CD4-positive, alpha-beta T cell (primary cell): ENCODE measurements at regions of chr3 and their contacts with region 1.

Region 1: DNA sequence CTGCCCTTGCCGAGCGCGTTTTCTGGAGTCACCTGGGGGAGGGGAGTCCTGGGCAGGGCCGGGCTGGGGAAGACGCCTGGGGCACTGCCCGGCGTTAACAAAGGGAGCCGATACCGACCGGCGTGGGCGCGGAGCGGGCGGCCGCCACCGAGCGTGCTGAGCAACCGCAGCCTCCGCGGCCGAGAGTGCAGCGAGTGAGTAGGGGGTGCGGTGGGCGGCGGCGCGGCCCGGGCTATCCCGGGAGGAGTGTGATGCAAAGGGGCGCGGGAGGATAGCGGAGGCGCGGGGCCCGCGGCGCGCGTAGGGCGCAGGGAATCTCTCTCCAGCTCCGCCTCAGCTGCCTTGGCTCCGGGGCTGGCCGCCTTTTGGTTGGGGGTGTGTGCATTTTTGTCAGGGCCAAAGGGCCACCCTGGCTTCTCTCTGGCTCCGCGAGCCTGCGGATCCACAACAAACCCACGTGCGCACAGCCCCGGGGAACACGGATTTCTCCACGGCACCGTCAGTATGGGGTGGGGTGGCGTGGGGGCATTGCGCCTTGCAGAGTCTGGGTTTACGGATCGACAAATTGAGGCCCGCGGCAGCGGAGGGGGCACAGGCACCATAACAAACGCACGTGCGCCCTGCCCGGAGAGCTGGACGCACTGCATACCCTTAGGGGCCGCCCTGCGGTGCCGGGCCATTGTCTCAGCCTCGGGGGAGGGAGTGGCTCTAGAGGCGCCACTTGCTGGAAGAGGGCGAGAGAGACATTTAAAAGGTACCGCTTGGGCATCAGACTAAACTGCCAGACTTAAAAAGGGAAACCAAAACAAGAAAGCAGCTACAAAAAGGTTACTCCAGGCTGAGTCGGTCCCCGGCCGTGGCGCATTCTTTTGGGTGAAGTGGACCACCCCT is 560 bp downstream of the ST6GAL1 start:
- DNase-seq: peak; percentile 47 to 88 (median 62)
- ATAC-seq: peak; percentile 76
- H3K4me3 ChIP-seq: peak overlapping the region; percentile 97
- H3K4me3 Mint-ChIP-seq: peak overlapping the region; percentile 100
- H3K27ac ChIP-seq: peak overlapping the region; percentile 68 to 87
- H3K27ac Mint-ChIP-seq: peak overlapping the region; percentile 94
- H3K4me1 ChIP-seq: peaks cover 34% of the 10 kb centered on the region
- H3K4me1 Mint-ChIP-seq: peaks cover 43% of the 10 kb centered on the region
- H3K27me3 ChIP-seq: no peaks in the 10 kb centered on the region
- H3K27me3 Mint-ChIP-seq: no peaks in the 10 kb centered on the region
- CTCF ChIP-seq: peak; percentile 48

Region 2: DNA sequence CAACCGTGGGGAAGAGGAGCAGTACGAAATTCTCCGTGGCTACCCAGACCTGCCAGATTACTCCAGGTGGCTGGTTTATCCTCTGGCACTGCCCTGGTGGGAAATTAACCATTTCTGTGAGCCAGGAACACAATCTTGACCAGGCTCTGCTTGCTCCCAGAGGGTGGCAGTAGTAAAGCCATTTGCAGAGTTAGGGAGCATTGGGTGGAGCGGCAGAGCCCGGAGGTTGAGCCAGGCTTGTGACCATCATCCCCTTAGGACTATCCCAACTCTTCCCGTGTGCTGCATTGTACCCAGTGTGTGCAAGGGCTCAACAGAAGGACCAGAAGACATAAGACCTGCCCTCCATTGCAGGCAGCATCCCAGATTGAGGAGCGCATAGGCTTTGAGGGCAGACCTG is 208.4 kb before region 1 on chr3:
- CTCF ChIA-PET with region 1: no interaction called
- POLR2A ChIA-PET with region 1: no interaction called
- intact Hi-C with region 1: no loop called
- DNase-seq: peak in 1 of 14 experiments; percentile 9
- ATAC-seq: no peak
- H3K4me3 ChIP-seq: no peak overlapping the region
- H3K4me3 Mint-ChIP-seq: no peak overlapping the region
- H3K27ac ChIP-seq: no peak overlapping the region
- H3K27ac Mint-ChIP-seq: no peak overlapping the region
- H3K4me1 ChIP-seq: no peaks in the 10 kb centered on the region
- H3K4me1 Mint-ChIP-seq: no peaks in the 10 kb centered on the region
- H3K27me3 ChIP-seq: no peaks in the 10 kb centered on the region
- H3K27me3 Mint-ChIP-seq: no peaks in the 10 kb centered on the region
- CTCF ChIP-seq: no peak

Region 3: DNA sequence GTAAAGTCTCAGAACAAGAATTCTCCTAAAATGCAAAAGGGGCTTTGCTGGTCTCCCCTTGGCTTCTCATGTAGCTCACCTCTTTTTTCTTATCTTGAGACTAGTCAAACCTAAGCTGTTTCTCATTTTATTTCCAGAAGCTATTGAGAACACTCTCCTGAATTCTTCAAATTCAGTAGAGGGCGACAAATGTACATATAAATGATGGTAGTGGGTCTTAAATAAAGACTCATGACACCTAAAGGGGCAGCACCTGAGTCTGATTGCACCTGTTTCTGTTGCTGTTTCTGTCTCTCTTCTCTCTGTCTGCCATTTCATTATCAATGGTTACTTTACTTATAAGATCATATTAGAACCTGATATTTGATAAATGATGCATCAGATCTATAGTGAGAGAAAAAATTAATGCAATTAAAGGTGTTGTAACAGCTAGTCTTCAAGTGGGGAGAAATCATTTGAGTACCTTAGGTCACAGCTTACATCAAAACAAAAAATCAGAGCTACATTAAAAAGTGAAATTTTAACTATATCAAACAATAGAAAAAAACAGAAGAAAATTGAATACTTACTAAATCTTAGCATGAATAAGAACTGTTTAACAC is 81.4 kb before region 1 on chr3:
- CTCF ChIA-PET with region 1: interaction called, 23 read pairs
- POLR2A ChIA-PET with region 1: interaction called, 35 read pairs
- intact Hi-C with region 1: loop called (anchors 1 kb)
- DNase-seq: peak in 4 of 14 experiments; percentile 24 to 81 (median 76)
- ATAC-seq: peak; percentile 99
- H3K4me3 ChIP-seq: no peak overlapping the region
- H3K4me3 Mint-ChIP-seq: no peak overlapping the region
- H3K27ac ChIP-seq: no peak overlapping the region
- H3K27ac Mint-ChIP-seq: peak overlapping the region; percentile 1
- H3K4me1 ChIP-seq: peaks cover 3% of the 10 kb centered on the region
- H3K4me1 Mint-ChIP-seq: peaks cover 12% of the 10 kb centered on the region
- H3K27me3 ChIP-seq: peaks cover 0 to 4% of the 10 kb centered on the region in 2 experiments
- H3K27me3 Mint-ChIP-seq: peaks cover 5% of the 10 kb centered on the region
- CTCF ChIP-seq: peak; percentile 75

Region 4: DNA sequence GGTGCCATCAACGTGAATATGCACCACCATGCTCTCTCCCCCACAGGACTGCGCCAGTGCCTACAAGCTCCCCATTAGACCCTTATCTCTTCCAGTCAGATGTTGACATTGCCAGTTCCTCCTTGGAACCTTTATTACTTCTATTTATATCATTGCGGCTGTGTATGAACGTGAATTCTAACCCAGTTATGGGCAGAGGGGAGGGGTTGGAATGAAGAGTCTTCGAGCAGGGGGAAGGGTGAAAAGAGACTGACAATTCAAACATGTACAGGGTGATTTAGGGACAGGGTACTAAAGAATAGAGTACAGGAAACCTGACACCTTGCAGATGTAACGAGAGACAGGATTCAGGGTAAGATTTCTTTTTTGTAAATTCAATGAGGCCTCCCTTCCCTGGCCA is 42.3 kb before region 1 on chr3:
- CTCF ChIA-PET with region 1: no interaction called
- POLR2A ChIA-PET with region 1: no interaction called
- intact Hi-C with region 1: no loop called
- DNase-seq: no peak
- ATAC-seq: no peak
- H3K4me3 ChIP-seq: no peak overlapping the region
- H3K4me3 Mint-ChIP-seq: no peak overlapping the region
- H3K27ac ChIP-seq: no peak overlapping the region
- H3K27ac Mint-ChIP-seq: no peak overlapping the region
- H3K4me1 ChIP-seq: peaks cover 3% of the 10 kb centered on the region
- H3K4me1 Mint-ChIP-seq: peaks cover 10% of the 10 kb centered on the region
- H3K27me3 ChIP-seq: no peaks in the 10 kb centered on the region
- H3K27me3 Mint-ChIP-seq: no peaks in the 10 kb centered on the region
- CTCF ChIP-seq: no peak

Region 5: GRCh38 chr3:186909078-186909853 is 21.6 kb before region 1 on chr3:
- CTCF ChIA-PET with region 1: interaction called, 8 read pairs
- POLR2A ChIA-PET with region 1: interaction called, 80 read pairs
- intact Hi-C with region 1: loop called (anchors 1 to 2 kb)
- DNase-seq: peak; percentile 68 to 93 (median 82)
- ATAC-seq: peak; percentile 93
- H3K4me3 ChIP-seq: peak overlapping the region; percentile 33
- H3K4me3 Mint-ChIP-seq: peak overlapping the region; percentile 81
- H3K27ac ChIP-seq: peak overlapping the region; percentile 64 to 69
- H3K27ac Mint-ChIP-seq: peak overlapping the region; percentile 98
- H3K4me1 ChIP-seq: peaks cover 29% of the 10 kb centered on the region
- H3K4me1 Mint-ChIP-seq: peaks cover 44% of the 10 kb centered on the region
- H3K27me3 ChIP-seq: no peaks in the 10 kb centered on the region
- H3K27me3 Mint-ChIP-seq: no peaks in the 10 kb centered on the region
- CTCF ChIP-seq: no peak

Region 6: DNA sequence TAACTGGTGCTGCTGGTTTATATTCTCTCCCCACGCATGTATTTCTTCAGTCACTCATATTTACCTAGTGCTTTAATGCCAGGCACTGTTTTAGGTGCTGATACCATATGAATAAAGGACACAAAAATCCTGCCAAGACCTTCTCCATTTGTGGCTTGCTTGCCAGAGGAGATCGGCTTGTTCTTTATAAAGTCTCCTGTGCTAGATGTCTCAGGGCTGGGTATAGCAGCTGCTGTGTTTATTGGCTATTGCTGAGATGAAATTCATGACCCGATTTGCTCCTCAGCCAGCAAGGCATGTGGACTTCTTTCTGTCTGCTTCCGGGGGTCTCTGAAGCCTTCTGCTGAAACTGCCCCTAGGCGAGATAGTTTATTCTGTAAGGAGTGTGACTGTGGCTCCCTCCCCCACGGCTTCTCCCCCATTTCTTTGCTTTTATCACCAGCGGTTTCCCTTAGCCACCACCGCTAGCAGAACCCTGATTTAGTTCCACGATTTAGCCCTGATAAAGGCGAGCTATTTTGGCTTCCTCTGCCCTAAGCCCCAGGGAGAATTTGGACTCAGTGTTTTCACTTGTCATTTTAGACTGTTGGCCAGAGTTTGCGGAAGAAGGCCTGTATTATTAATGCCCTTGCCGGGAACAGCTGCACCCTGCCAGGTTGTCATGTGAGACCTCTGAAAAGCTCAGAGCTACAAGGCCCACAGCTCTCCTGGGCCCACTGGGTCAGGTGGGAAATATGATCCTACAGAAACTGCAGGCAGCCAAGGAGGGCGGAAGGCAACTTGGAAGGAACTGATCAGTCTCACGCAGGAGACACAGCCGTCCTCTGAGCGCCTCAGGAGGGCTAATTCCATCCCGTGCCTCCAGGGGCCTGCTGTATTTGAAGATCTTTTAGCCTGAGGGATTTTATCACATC is 46.2 kb after region 1 on chr3:
- CTCF ChIA-PET with region 1: no interaction called
- POLR2A ChIA-PET with region 1: interaction called, 11 read pairs
- intact Hi-C with region 1: no loop called
- DNase-seq: no peak
- ATAC-seq: no peak
- H3K4me3 ChIP-seq: no peak overlapping the region
- H3K4me3 Mint-ChIP-seq: no peak overlapping the region
- H3K27ac ChIP-seq: no peak overlapping the region
- H3K27ac Mint-ChIP-seq: no peak overlapping the region
- H3K4me1 ChIP-seq: no peaks in the 10 kb centered on the region
- H3K4me1 Mint-ChIP-seq: peaks cover 10% of the 10 kb centered on the region
- H3K27me3 ChIP-seq: no peaks in the 10 kb centered on the region
- H3K27me3 Mint-ChIP-seq: no peaks in the 10 kb centered on the region
- CTCF ChIP-seq: no peak

Region 7: GRCh38 chr3:187025656-187026316 is 94.9 kb after region 1 on chr3:
- CTCF ChIA-PET with region 1: interaction called, 8 read pairs
- POLR2A ChIA-PET with region 1: interaction called, 88 read pairs
- intact Hi-C with region 1: loop called (anchors 2 to 5 kb)
- DNase-seq: peak in 9 of 14 experiments; percentile 28 to 64 (median 38)
- ATAC-seq: peak; percentile 2
- H3K4me3 ChIP-seq: peak overlapping the region; percentile 72
- H3K4me3 Mint-ChIP-seq: peak overlapping the region; percentile 89
- H3K27ac ChIP-seq: peak overlapping the region; percentile 72 to 87
- H3K27ac Mint-ChIP-seq: peak overlapping the region; percentile 98
- H3K4me1 ChIP-seq: peaks cover 62% of the 10 kb centered on the region
- H3K4me1 Mint-ChIP-seq: peaks cover 69% of the 10 kb centered on the region
- H3K27me3 ChIP-seq: no peaks in the 10 kb centered on the region
- H3K27me3 Mint-ChIP-seq: no peaks in the 10 kb centered on the region
- CTCF ChIP-seq: no peak

Region 8: GRCh38 chr3:187139126-187139894 is 208.4 kb after region 1 on chr3 and contains the start of gene RPL39L:
- CTCF ChIA-PET with region 1: interaction called, 5 read pairs
- POLR2A ChIA-PET with region 1: interaction called, 21 read pairs
- intact Hi-C with region 1: no loop called
- DNase-seq: peak; percentile 85 to 97 (median 90)
- ATAC-seq: peak; percentile 95
- H3K4me3 ChIP-seq: peak within 1 kb of the TSS; percentile 69
- H3K4me3 Mint-ChIP-seq: peak within 1 kb of the TSS; percentile 90
- H3K27ac ChIP-seq: peak within 1 kb of the TSS; percentile 81 to 85
- H3K27ac Mint-ChIP-seq: peak within 1 kb of the TSS; percentile 93
- H3K4me1 ChIP-seq: peaks cover 16% of the 10 kb centered on the region
- H3K4me1 Mint-ChIP-seq: peaks cover 16% of the 10 kb centered on the region
- H3K27me3 ChIP-seq: no peaks in the 10 kb centered on the region
- H3K27me3 Mint-ChIP-seq: no peaks in the 10 kb centered on the region
- CTCF ChIP-seq: peak; percentile 97
- total RNA-seq, gene RPL39L: 1.1 to 1.7 TPM

Region 9: DNA sequence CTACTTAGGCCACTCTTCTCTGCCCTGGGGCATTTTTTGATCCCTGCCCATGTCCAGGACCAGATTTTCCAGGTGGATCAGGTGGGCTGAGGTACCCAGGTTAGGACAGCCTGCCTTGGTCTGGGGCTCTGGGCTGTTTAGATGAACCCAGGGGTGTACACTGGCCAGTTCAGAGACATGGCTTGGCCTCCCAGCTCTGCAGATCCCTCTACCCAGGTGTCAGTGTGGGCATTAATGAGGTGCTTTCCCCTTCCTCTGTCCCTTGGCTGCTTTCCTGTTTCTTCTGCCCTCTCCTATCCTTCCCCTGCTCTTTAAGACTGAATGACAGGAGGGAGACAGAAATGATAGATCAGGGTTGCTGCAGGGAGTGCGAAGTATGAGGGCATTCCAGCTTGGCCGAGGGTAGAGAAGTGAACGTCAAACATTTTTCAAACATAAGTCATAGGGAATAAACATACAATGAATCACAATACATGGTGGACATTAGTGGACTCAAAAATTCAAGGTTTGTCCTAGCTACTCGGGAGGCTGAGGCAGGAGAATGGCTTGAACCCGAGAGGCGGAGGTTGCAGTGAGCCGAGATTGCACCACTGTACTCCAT is 296.9 kb after region 1 on chr3:
- CTCF ChIA-PET with region 1: no interaction called
- POLR2A ChIA-PET with region 1: no interaction called
- intact Hi-C with region 1: no loop called
- DNase-seq: no peak
- ATAC-seq: no peak
- H3K4me3 ChIP-seq: no peak overlapping the region
- H3K4me3 Mint-ChIP-seq: no peak overlapping the region
- H3K27ac ChIP-seq: no peak overlapping the region
- H3K27ac Mint-ChIP-seq: no peak overlapping the region
- H3K4me1 ChIP-seq: no peaks in the 10 kb centered on the region
- H3K4me1 Mint-ChIP-seq: no peaks in the 10 kb centered on the region
- H3K27me3 ChIP-seq: peaks cover 0 to 6% of the 10 kb centered on the region in 2 experiments
- H3K27me3 Mint-ChIP-seq: peaks cover 17% of the 10 kb centered on the region
- CTCF ChIP-seq: no peak